Transverse colon (tissue), 4 donors: ENCODE measurements at regions of chr19 and their contacts with region 1.

Region 1: GRCh38 chr19:31525610-31526147 is 176.4 kb upstream of the TSHZ3 start:
- DNase-seq: no peak
- H3K4me3 ChIP-seq: no peak overlapping the region
- H3K27ac ChIP-seq: no peak overlapping the region
- H3K4me1 ChIP-seq: no peaks in the 10 kb centered on the region
- H3K27me3 ChIP-seq: no peaks in the 10 kb centered on the region
- CTCF ChIP-seq: no peak
- EP300 ChIP-seq: no peak
- POLR2A ChIP-seq: no peak

Region 2: DNA sequence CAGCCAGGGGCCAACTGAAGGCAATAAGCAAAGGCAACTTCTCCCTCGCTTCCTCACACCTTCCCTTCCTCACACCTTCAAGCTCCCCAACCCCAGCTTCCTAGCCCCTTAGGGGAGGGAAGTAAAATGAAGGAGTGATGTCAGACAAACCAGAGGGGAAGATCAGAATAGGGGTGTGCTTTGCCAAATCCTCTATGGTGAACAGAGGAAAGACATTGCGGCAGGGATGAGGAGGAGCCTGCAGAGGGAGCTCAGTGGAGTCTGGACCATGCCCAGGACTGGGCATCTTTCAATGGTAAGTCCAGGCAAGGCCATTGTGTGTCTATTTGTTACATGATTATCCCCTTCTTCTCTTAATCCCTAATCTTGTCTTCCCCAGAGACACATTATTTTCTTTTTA is 340.4 kb before region 1 on chr19:
- in situ Hi-C with region 1: no loop called
- intact Hi-C with region 1: no loop called
- DNase-seq: no peak
- H3K4me3 ChIP-seq: no peak overlapping the region
- H3K27ac ChIP-seq: no peak overlapping the region
- H3K4me1 ChIP-seq: no peaks in the 10 kb centered on the region
- H3K27me3 ChIP-seq: no peaks in the 10 kb centered on the region
- CTCF ChIP-seq: no peak
- EP300 ChIP-seq: no peak
- POLR2A ChIP-seq: no peak

Region 3: GRCh38 chr19:31543456-31543855 is 17.8 kb after region 1 on chr19:
- in situ Hi-C with region 1: no loop called
- intact Hi-C with region 1: loop called (anchors 1 kb)
- DNase-seq: no peak
- H3K4me3 ChIP-seq: no peak overlapping the region
- H3K27ac ChIP-seq: no peak overlapping the region
- H3K4me1 ChIP-seq: no peaks in the 10 kb centered on the region
- H3K27me3 ChIP-seq: no peaks in the 10 kb centered on the region
- CTCF ChIP-seq: no peak
- EP300 ChIP-seq: no peak
- POLR2A ChIP-seq: no peak

Region 4: DNA sequence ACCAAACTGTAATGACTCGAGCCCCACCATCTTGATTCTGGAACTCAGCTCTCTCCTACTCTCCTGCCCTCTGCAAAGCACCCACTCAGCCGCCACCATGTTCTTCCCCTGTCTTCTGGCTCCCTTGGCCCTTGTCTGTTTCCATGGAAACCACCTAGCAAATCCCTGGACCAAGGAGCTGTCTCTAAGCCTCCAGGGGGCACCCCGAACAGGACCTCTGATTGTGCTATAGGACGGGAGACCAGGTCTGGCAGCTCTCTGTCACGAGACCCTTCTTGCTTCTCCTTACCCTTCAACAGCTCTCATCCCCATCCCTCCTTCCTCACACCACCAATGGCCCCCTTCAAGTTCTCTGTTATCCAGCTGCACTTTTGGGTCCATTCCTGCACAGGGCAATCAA is 542.0 kb after region 1 on chr19:
- in situ Hi-C with region 1: no loop called
- intact Hi-C with region 1: no loop called
- DNase-seq: no peak
- H3K4me3 ChIP-seq: no peak overlapping the region
- H3K27ac ChIP-seq: no peak overlapping the region
- H3K4me1 ChIP-seq: no peaks in the 10 kb centered on the region
- H3K27me3 ChIP-seq: no peaks in the 10 kb centered on the region
- CTCF ChIP-seq: no peak
- EP300 ChIP-seq: no peak
- POLR2A ChIP-seq: no peak